ENCODE measurements at regions of chr2 and their contacts with region 1.

Region 1: DNA sequence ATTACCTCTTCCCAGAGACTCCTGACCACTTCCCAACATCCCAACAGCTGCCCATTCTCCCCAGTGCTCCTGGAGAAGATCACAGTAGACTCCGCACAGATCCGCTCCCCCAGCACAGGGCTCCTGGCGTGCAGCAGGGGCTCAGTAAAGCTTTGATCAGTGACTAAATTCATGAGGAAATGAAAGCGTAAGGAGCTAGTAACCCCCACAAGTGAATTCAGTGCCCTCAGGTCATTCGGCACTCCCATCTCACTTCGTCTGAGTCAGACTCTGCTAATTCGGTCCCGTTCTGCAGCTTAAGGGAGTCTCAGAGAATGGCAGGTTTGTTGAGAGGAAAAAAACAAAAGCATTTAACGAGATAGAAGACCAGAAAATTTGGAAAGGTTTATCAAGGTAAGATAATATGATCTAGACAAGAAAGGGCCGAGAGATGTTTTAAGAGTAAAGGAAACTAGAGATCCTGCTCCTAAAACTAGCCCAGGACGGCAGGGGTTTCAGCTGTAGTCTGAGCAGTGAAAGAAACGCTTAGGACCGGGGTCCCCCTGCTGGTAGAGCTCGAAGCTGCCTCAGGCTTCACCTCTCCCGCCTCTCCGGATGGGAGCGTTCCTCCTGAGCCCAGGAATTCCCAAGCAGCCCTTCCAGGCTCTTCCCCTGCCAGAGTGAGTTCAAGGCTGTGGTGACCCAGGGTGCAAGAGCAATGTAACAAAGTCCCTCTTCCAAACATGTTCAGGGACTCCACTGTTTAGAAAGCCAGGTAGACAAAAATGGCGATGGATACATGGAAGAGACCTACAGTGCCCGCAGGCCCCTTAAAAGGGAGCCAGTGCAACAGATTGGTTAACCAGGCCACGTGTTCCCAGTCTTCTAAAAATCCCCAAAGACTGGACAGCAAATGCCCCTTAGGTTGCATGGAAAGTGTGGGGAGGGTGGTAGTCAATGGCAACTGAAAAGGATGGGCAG is 127.3 kb downstream of the DNER start:
- DNase-seq: peak; percentile 75
- H3K4me3 ChIP-seq: peak overlapping the region in 1 of 4 donors; percentile 27
- H3K27ac ChIP-seq: no peak overlapping the region
- H3K4me1 ChIP-seq: peaks cover 0 to 4% (median 2%) of the 10 kb centered on the region in 4 donors
- H3K27me3 ChIP-seq: no peaks in the 10 kb centered on the region
- CTCF ChIP-seq: peak; percentile 73 to 81 (median 79)
- EP300 ChIP-seq: no peak
- POLR2A ChIP-seq: no peak

Region 2: GRCh38 chr2:229090225-229090624 is 496.8 kb before region 1 on chr2:
- in situ Hi-C with region 1: no loop called
- intact Hi-C with region 1: no loop called
- DNase-seq: peak; percentile 14
- H3K4me3 ChIP-seq: no peak overlapping the region
- H3K27ac ChIP-seq: peak overlapping the region in 2 of 4 donors; percentile 24 to 39
- H3K4me1 ChIP-seq: peaks cover 0 to 29% (median 14%) of the 10 kb centered on the region in 4 donors
- H3K27me3 ChIP-seq: no peaks in the 10 kb centered on the region
- CTCF ChIP-seq: no peak
- EP300 ChIP-seq: no peak
- POLR2A ChIP-seq: no peak

Region 3: DNA sequence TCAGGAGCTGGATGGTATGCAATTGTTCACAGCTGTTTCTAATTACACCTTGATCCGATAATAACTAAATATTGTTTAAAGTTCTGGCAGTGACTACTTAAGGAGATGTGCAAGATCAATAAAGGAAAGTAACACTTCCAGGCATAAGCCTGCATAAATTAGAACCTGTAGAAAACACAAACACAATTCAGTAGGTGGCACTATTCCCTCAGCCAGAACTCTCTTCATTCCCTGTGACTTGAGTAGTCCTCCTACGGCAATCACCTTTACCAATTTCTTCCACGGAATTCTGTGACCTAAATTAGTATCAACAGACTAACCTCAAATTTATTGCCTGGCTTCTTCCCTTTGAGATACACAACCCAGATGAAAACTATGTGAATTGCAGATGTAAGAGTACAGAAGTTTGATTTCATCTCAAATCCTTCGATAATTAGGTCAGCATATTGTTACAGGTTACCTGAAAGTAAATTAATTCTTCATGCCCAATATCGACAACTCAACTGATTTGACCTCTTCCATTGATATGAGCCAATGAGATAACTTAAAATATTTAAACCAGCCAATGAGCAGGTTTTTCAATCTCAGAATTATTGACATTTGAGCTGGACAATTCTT is 453.8 kb before region 1 on chr2:
- in situ Hi-C with region 1: loop called in 1 of 4 experiments (anchors 25 kb)
- intact Hi-C with region 1: no loop called
- DNase-seq: peak; percentile 26
- H3K4me3 ChIP-seq: no peak overlapping the region
- H3K27ac ChIP-seq: no peak overlapping the region
- H3K4me1 ChIP-seq: peaks cover 8 to 39% (median 19%) of the 10 kb centered on the region in 4 donors
- H3K27me3 ChIP-seq: no peaks in the 10 kb centered on the region
- CTCF ChIP-seq: peak; percentile 41 to 70 (median 52)
- EP300 ChIP-seq: no peak
- POLR2A ChIP-seq: no peak

Region 4: GRCh38 chr2:229431327-229431954 is 155.6 kb before region 1 on chr2:
- in situ Hi-C with region 1: loop called in 1 of 4 experiments (anchors 25 kb)
- intact Hi-C with region 1: loop called (anchors 5 kb)
- DNase-seq: no peak
- H3K4me3 ChIP-seq: no peak overlapping the region
- H3K27ac ChIP-seq: no peak overlapping the region
- H3K4me1 ChIP-seq: no peaks in the 10 kb centered on the region
- H3K27me3 ChIP-seq: no peaks in the 10 kb centered on the region
- CTCF ChIP-seq: peak; percentile 32 to 48 (median 42)
- EP300 ChIP-seq: no peak
- POLR2A ChIP-seq: no peak

Region 5: DNA sequence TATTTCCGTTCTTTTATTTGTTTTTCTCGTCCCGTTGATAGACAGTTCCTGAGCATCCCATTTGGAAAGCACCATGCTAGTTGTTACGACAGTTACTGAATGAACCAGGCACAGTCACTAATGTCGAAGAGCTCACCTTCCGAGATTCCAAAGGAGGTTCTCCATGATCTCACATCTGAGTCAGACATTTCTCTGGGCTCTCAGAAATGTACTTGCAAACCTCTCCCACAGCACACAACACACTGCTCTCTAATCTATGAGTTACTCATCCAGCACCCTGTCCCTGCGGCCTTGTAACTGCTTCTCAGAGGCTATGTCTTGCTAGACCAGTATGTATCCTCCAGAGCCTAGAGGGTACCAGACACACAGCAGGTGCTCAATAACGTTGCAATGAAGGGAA is 47.4 kb before region 1 on chr2:
- in situ Hi-C with region 1: no loop called
- intact Hi-C with region 1: no loop called
- DNase-seq: no peak
- H3K4me3 ChIP-seq: no peak overlapping the region
- H3K27ac ChIP-seq: no peak overlapping the region
- H3K4me1 ChIP-seq: no peaks in the 10 kb centered on the region
- H3K27me3 ChIP-seq: no peaks in the 10 kb centered on the region
- CTCF ChIP-seq: no peak
- EP300 ChIP-seq: no peak
- POLR2A ChIP-seq: no peak

Region 6: GRCh38 chr2:230007931-230008707 is 421.1 kb after region 1 on chr2:
- in situ Hi-C with region 1: no loop called
- intact Hi-C with region 1: no loop called
- DNase-seq: peak; percentile 84
- H3K4me3 ChIP-seq: no peak overlapping the region
- H3K27ac ChIP-seq: no peak overlapping the region
- H3K4me1 ChIP-seq: peaks cover 0 to 7% (median 3%) of the 10 kb centered on the region in 4 donors
- H3K27me3 ChIP-seq: no peaks in the 10 kb centered on the region
- CTCF ChIP-seq: peak; percentile 78 to 85 (median 83)
- EP300 ChIP-seq: no peak
- POLR2A ChIP-seq: no peak

Region 7: DNA sequence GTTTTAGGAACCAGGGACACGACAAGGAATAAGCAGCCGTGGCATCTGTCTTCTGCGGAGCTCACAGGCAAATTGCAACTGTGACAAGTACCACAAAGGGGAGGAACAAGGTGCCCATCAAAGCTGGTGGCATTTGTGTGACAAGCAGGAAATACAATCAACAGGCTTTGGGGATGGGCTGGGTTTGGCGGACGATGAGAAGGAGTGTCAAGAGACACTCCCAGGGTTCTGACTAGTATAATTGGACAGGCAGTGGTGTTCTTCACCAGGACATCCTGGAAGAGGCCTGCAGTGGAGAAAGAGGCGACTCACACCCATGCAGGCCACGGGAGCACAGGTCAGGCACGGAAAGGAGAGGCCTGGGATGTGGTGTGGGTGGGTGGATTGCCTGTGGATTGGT is 1394.7 kb after region 1 on chr2:
- in situ Hi-C with region 1: no loop called
- intact Hi-C with region 1: no loop called
- DNase-seq: no peak
- H3K4me3 ChIP-seq: no peak overlapping the region
- H3K27ac ChIP-seq: no peak overlapping the region
- H3K4me1 ChIP-seq: peaks cover 0 to 2% (median under 1%) of the 10 kb centered on the region in 4 donors
- H3K27me3 ChIP-seq: peaks cover 4% of the 10 kb centered on the region
- CTCF ChIP-seq: no peak
- EP300 ChIP-seq: no peak
- POLR2A ChIP-seq: no peak